ENCODE measurements at regions of chr7 and their contacts with region 1.

Region 1: GRCh38 chr7:47647181-47647917 is 65.4 kb upstream of the TNS3 start:
- DNase-seq: peak in 1 of 5 donors; percentile 51
- ATAC-seq: peak in 3 of 4 donors; percentile 30 to 56 (median 49)
- H3K4me3 ChIP-seq: no peak overlapping the region
- H3K27ac ChIP-seq: peak overlapping the region in 7 of 12 donors; percentile 2 to 73 (median 33)
- H3K4me1 ChIP-seq: peaks cover 0 to 23% (median 8%) of the 10 kb centered on the region in 12 donors
- H3K27me3 ChIP-seq: no peaks in the 10 kb centered on the region
- CTCF ChIP-seq: no peak
- POLR2A ChIP-seq: no peak

Region 2: GRCh38 chr7:47591655-47592572 is 55.4 kb before region 1 on chr7:
- intact Hi-C with region 1: loop called in 1 of 10 experiments (anchors 5 kb)
- DNase-seq: peak in 1 of 5 donors; percentile 17
- ATAC-seq: no peak
- H3K4me3 ChIP-seq: no peak overlapping the region
- H3K27ac ChIP-seq: no peak overlapping the region
- H3K4me1 ChIP-seq: peaks cover 0 to 9% (median 0%) of the 10 kb centered on the region in 12 donors
- H3K27me3 ChIP-seq: no peaks in the 10 kb centered on the region
- CTCF ChIP-seq: no peak
- POLR2A ChIP-seq: no peak